Activated CD4-positive, alpha-beta memory T cell treated with anti-CD3 and anti-CD28 coated beads for 36 hours (primary cell): ENCODE measurements at regions of chr19 and their contacts with region 1.

Region 1: DNA sequence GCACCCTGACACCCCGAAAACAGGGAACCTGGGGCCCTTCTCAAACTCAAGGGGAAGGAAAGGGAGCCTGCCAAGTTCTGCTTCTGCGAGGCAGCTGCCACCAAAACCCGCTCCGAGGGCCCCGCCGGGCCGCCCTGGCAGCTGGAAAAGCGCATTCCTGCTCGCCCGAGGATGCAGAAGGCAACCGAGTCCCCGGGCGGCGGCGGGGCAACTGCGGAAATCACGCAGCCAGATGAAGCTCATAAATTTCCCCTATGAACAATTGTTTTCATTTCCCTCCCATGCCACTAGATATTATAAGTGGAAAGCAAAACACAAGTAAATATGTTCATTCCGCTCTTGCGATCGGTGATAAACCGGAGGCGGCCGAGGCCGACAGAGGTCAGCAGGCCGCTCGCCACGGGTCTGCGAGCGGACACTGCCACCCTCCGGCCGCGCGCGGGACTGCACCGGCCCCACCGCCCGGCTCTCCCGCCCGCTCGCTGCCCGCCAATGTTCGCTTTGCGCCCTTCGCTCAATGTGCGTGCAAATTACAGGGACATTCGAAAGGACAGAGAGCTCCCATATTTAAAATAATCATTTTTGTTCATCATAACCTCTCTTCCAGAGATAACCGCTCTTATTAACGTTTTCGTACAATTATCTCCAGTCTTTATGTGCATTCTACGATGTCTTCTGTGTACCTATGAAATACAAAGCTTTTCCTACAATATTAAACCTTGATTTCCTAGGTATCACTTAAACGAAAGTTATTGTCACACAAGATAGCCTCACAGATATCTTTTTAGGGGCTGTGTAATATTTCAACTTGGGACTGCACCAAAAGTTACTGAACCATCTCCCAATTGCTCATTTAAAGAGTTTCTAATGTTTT is 120.8 kb upstream of the ZNF507 start:
- DNase-seq: peak; percentile 66
- H3K4me3 Mint-ChIP-seq: peak overlapping the region; percentile 50
- H3K27ac Mint-ChIP-seq: no peak overlapping the region
- H3K4me1 Mint-ChIP-seq: peaks cover 9% of the 10 kb centered on the region
- H3K27me3 Mint-ChIP-seq: peaks cover 32% of the 10 kb centered on the region

Region 2: DNA sequence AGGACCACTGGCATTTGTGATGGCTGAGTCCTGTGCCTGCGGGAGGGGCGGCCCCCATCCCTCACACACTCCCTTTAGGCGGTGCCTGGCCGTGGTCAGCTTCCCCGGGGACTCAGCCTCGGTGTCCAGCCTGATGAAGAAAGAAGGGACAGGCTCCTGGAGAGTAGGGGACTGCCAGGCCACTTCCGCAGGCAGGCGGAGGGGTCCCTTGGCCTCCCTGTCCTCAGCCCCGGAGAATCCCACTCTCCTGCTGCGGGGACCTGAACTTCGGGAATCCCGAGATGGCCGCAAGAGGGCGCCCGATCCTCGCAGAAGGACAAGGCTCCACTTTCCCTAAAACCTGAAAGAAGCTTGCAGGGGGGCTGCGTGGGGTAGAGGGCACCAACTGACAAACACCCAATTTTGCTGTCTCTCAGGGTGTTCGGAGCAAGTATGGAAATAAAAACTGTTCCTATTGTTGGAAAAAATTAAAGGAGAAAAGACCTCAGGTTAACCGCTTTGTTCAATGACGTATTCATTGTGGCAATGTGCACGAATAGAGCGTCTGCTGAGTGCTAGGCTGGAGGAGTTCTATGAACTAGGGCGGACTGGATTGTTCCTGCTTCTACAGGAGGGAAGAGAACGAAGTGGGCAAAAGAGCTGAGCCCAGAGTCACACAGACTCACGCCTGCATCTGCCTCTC is 1555.1 kb before region 1 on chr19:
- CTCF ChIA-PET with region 1: interaction called, 26 read pairs
- POLR2A ChIA-PET with region 1: no interaction called
- intact Hi-C with region 1: loop called (anchors 5 kb)
- DNase-seq: peak; percentile 57
- H3K4me3 Mint-ChIP-seq: no peak overlapping the region
- H3K27ac Mint-ChIP-seq: no peak overlapping the region
- H3K4me1 Mint-ChIP-seq: no peaks in the 10 kb centered on the region
- H3K27me3 Mint-ChIP-seq: peaks cover 24% of the 10 kb centered on the region

Region 3: GRCh38 chr19:30784850-30785457 is 1439.7 kb before region 1 on chr19:
- CTCF ChIA-PET with region 1: interaction called, 13 read pairs
- POLR2A ChIA-PET with region 1: no interaction called
- intact Hi-C with region 1: loop called (anchors 2 kb)
- DNase-seq: peak; percentile 73
- H3K4me3 Mint-ChIP-seq: no peak overlapping the region
- H3K27ac Mint-ChIP-seq: no peak overlapping the region
- H3K4me1 Mint-ChIP-seq: no peaks in the 10 kb centered on the region
- H3K27me3 Mint-ChIP-seq: peaks cover 6% of the 10 kb centered on the region

Region 4: DNA sequence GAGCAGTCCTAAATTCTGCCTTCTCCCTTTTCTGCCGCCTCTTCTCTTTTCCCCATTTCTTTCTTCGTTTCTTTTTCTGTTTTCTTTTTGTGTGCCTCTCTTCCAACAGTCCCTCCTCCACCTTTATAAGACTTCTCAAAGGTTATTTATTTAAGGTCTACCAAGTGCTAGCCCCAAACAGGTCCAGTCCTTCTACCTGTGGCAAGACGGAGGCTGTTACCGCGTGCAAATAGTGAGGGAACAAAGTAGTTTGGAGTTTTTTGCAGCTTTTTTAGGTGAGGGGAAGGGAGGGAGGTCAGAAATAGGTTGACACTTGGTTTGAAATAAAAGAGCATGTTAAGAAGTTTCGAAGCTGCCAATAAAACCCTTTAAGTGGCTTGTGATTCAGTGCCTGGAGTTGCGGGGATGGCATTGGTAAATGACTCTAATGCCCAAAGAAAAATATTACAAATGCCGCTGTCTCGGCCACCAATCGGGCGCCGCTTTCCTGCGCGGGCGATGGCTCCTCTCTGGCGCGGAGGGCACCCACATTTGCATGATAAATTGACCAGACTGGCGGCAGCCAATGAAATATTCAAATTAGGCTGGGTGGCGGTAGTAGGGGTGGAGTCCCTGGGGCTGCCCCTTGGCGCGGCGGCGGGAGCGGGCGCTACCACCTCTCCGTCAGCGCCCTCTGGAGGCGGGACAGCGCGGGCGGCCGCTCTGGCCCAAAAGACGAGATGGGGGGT is 867.9 kb before region 1 on chr19:
- CTCF ChIA-PET with region 1: interaction called, 4 read pairs
- POLR2A ChIA-PET with region 1: no interaction called
- intact Hi-C with region 1: loop called (anchors 5 kb)
- DNase-seq: peak; percentile 80
- H3K4me3 Mint-ChIP-seq: no peak overlapping the region
- H3K27ac Mint-ChIP-seq: no peak overlapping the region
- H3K4me1 Mint-ChIP-seq: peaks cover 47% of the 10 kb centered on the region
- H3K27me3 Mint-ChIP-seq: peaks cover 71% of the 10 kb centered on the region

Region 5: GRCh38 chr19:32208060-32208459 is 16.5 kb before region 1 on chr19:
- CTCF ChIA-PET with region 1: interaction called, 13 read pairs
- POLR2A ChIA-PET with region 1: no interaction called
- intact Hi-C with region 1: no loop called
- DNase-seq: no peak
- H3K4me3 Mint-ChIP-seq: no peak overlapping the region
- H3K27ac Mint-ChIP-seq: no peak overlapping the region
- H3K4me1 Mint-ChIP-seq: no peaks in the 10 kb centered on the region
- H3K27me3 Mint-ChIP-seq: peaks cover 16% of the 10 kb centered on the region